IMR-90 (cell line): ENCODE measurements at regions of chr1 and their contacts with region 1.

Region 1: DNA sequence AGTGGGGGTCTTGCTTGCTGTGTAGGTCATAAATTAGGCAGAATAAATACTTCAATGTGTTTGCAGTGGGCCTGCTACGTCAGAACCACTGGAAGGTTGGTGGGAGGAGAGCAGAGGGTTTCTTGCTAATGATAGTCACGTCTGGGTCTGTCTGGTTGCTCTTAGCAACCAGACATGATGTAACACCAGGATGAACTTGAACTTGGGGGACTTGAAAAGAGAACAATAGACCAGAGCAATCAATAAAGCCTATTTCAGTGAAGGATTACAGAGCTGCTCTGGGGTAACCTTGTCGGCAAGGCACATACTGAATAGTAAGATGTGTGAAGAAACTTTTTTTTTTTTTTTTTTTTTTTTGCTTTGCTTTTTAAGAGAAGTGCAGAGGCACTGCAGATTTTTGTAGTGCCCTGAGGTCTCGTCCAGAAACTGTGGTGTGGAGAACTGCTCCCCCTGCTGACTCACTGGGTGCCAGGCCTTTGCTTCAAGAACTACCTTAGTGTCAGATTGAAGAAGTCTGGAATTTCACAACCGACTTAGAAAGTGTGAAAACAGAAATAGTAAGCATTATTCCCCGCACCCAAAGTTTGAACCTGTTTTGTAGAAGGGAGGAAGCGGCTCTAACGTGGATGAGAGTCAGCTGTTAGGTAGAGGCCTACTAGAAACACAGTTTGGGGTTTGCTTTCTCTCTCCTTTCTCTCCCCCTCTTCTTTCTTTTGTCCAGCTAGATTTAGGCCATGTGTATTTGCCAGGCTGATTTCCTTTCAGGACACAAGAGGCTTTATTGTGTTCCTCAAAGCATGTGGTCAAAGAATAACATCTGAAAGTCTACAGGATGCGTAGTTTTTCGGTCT is 271.6 kb downstream of the TM2D1 start:
- DNase-seq: peak; percentile 86
- ATAC-seq: peak; percentile 98
- H3K4me3 ChIP-seq: no peak overlapping the region
- H3K27ac ChIP-seq: no peak overlapping the region
- H3K4me1 ChIP-seq: peaks cover 2% of the 10 kb centered on the region; the same call in 1 of the 2 replicates
- H3K27me3 ChIP-seq: no peaks in the 10 kb centered on the region; the same call in 1 of the 2 replicates
- CTCF ChIP-seq: peak; percentile 90
- POLR2A ChIP-seq: no peak
- RAD21 ChIP-seq: peak; percentile 80

Region 2: GRCh38 chr1:60848583-60849188 is 604.6 kb before region 1 on chr1:
- CTCF ChIA-PET with region 1: no interaction called
- POLR2A ChIA-PET with region 1: no interaction called
- dilution Hi-C with region 1: no loop called
- in situ Hi-C with region 1: no loop called
- intact Hi-C with region 1: loop called (anchors 1 kb)
- DNase-seq: peak; percentile 38
- ATAC-seq: no peak
- H3K4me3 ChIP-seq: no peak overlapping the region
- H3K27ac ChIP-seq: no peak overlapping the region
- H3K4me1 ChIP-seq: no peaks in the 10 kb centered on the region
- H3K27me3 ChIP-seq: no peaks in the 10 kb centered on the region
- CTCF ChIP-seq: peak; percentile 58
- POLR2A ChIP-seq: no peak
- RAD21 ChIP-seq: peak; percentile 50

Region 3: GRCh38 chr1:60978421-60979357 is 474.6 kb before region 1 on chr1:
- CTCF ChIA-PET with region 1: interaction called, 5 read pairs
- POLR2A ChIA-PET with region 1: no interaction called
- dilution Hi-C with region 1: no loop called
- in situ Hi-C with region 1: loop called (anchors 10 kb)
- intact Hi-C with region 1: loop called (anchors 1 kb)
- DNase-seq: peak; percentile 50
- ATAC-seq: peak; percentile 97
- H3K4me3 ChIP-seq: no peak overlapping the region
- H3K27ac ChIP-seq: no peak overlapping the region
- H3K4me1 ChIP-seq: no peaks in the 10 kb centered on the region
- H3K27me3 ChIP-seq: no peaks in the 10 kb centered on the region
- CTCF ChIP-seq: peak; percentile 72
- POLR2A ChIP-seq: no peak
- RAD21 ChIP-seq: peak; percentile 80

Region 4: GRCh38 chr1:61049850-61050540 is 403.3 kb before region 1 on chr1:
- CTCF ChIA-PET with region 1: interaction called, 10 read pairs
- POLR2A ChIA-PET with region 1: no interaction called
- dilution Hi-C with region 1: no loop called
- in situ Hi-C with region 1: no loop called
- intact Hi-C with region 1: loop called (anchors 1 kb)
- DNase-seq: peak; percentile 68
- ATAC-seq: peak; percentile 95
- H3K4me3 ChIP-seq: peak overlapping the region; percentile 61
- H3K27ac ChIP-seq: no peak overlapping the region
- H3K4me1 ChIP-seq: no peaks in the 10 kb centered on the region
- H3K27me3 ChIP-seq: peaks cover 42% of the 10 kb centered on the region
- CTCF ChIP-seq: peak; percentile 92
- POLR2A ChIP-seq: no peak
- RAD21 ChIP-seq: peak; percentile 81

Region 5: GRCh38 chr1:61184040-61184713 is 269.2 kb before region 1 on chr1:
- CTCF ChIA-PET with region 1: no interaction called
- POLR2A ChIA-PET with region 1: no interaction called
- dilution Hi-C with region 1: no loop called
- in situ Hi-C with region 1: no loop called
- intact Hi-C with region 1: loop called (anchors 5 kb)
- DNase-seq: peak; percentile 63
- ATAC-seq: peak; percentile 67
- H3K4me3 ChIP-seq: peak overlapping the region; percentile 8; the same call in 1 of the 2 replicates
- H3K27ac ChIP-seq: peak overlapping the region; percentile 77; the same call in 1 of the 2 replicates
- H3K4me1 ChIP-seq: peaks cover 6% of the 10 kb centered on the region
- H3K27me3 ChIP-seq: no peaks in the 10 kb centered on the region
- CTCF ChIP-seq: no peak
- POLR2A ChIP-seq: no peak
- RAD21 ChIP-seq: no peak

Region 6: DNA sequence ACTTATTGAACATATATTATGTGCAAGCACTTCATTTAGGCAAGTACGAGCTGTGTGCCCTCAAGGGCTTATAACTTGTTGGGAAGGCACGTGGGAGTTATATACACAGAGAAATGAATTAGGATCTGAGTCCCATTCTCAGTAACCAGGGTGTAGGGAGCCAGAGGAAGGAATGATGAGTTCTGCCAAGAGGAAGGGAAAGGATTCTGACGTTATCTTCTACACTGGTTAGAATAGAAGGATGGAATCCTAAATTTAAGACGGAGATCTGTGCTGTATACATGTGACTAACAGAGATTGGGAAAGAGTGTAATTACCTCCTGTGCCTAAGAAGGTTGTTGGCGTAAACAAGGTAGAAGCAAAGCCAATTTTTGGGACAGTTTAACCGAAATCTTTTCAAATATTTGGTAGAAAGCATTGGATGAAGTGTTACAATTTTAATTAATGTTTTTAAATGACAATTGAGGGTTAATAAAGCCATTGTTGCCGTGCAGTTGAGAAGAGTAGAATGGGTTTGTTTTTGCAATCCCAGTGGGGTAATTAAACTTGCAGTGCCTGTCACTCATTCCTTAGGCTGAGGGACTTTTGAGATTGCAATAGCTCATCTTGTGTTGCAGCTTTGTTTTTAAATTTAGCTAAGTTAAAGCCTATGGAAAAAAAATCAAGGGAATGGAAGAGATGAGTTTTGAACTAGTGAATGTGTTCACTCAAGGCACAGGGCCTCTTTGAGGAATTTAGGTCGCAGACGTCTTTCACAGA is 193.8 kb before region 1 on chr1:
- CTCF ChIA-PET with region 1: no interaction called
- POLR2A ChIA-PET with region 1: no interaction called
- dilution Hi-C with region 1: no loop called
- in situ Hi-C with region 1: no loop called
- intact Hi-C with region 1: no loop called
- DNase-seq: no peak
- ATAC-seq: no peak
- H3K4me3 ChIP-seq: no peak overlapping the region
- H3K27ac ChIP-seq: no peak overlapping the region
- H3K4me1 ChIP-seq: peaks cover 2% of the 10 kb centered on the region; the same call in 1 of the 2 replicates
- H3K27me3 ChIP-seq: no peaks in the 10 kb centered on the region
- CTCF ChIP-seq: no peak
- POLR2A ChIP-seq: no peak
- RAD21 ChIP-seq: no peak

Region 7: DNA sequence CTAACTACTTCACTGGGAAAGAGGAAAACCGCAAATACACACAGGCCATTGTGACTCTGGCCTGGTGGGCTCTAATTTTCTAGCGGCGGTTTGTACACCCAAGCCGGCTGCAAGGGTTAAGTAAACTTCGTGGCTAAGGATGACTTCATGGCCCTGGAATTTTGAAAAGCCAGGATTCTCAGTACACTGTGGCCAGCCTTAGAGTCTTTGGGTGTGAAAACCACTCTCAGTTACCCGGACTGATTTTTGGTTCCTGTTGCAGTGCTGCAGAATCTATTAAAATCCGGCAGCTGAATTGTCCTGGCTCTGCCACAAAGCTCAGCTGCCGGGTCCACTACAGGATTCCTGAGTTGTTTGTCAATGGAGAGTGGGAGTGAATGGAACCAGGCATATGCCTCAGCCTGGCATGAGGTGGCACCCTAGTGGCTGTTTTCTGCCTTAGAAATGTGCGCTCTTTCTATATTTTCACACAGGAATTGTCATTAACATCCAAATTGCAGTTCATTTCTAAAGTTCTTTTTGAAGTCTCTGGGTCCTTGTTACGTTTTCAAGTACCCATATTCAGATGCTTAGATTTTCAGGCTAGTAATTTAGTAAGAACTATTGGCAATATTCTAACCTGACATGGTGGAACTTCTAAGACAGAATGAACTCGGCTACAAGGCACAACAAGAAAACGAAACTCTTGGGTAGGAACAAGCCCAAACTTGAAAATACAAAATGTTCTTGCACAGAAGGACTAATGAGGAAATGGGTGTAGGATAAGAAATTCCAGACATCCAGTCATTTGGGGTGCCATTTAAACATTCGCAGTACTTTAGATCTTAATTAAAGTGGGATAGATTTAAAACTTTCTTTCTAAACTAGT is 115.1 kb before region 1 on chr1:
- CTCF ChIA-PET with region 1: no interaction called
- POLR2A ChIA-PET with region 1: no interaction called
- dilution Hi-C with region 1: no loop called
- in situ Hi-C with region 1: no loop called
- intact Hi-C with region 1: loop called (anchors 1 kb)
- DNase-seq: peak; percentile 75
- ATAC-seq: peak; percentile 94
- H3K4me3 ChIP-seq: no peak overlapping the region
- H3K27ac ChIP-seq: peak overlapping the region; percentile 6; the same call in 1 of the 2 replicates
- H3K4me1 ChIP-seq: no peaks in the 10 kb centered on the region
- H3K27me3 ChIP-seq: peaks cover 29% of the 10 kb centered on the region
- CTCF ChIP-seq: peak; percentile 60
- POLR2A ChIP-seq: no peak
- RAD21 ChIP-seq: peak; percentile 66